ENCODE measurements at regions of chr12 and their contacts with region 1.

Region 1: DNA sequence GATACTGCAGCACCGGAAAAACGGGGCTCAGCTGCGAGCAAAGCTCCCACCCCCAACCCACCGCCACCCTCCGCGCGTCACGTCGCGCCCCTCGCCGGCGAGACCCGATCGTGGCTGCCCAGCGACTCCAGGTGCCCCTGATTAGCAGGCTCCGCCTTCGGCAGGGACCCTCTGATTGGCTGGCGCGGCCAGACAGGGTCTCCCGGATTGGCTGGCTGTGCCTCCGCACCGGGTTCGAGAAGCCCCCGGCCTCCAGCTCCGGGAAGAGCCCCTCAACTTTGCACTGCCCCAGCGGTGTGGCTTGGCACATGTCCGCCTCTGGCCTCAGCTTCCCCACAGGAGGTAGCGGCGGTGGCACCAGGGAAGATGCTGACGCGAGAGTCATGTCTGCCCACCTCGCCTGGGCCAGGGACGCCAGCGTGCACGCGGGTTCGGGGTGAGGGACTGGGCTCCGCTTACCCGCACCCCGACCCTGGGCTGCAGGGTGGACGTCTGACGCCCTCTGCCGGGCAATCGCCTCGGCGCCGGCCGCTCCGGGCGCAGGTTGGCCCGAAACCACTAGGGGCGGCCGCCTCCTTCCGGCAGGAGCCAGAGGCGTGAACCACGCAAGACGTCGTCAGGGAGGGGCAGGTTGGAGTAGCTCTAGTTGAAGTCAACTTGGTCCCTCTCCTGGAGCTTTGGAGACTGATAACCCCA is 498 bp upstream of the RHOF start:
- DNase-seq: peak; percentile 99
- H3K4me3 Mint-ChIP-seq: peak overlapping the region; percentile 94
- H3K27ac Mint-ChIP-seq: peak overlapping the region; percentile 92
- H3K4me1 Mint-ChIP-seq: peaks cover 55% of the 10 kb centered on the region
- H3K27me3 Mint-ChIP-seq: no peaks in the 10 kb centered on the region

Region 2: GRCh38 chr12:120534203-120534702 is 1259.7 kb before region 1 on chr12 and contains the start of gene RNF10:
- intact Hi-C with region 1: loop called (anchors 10 kb)
- DNase-seq: peak; percentile 94
- H3K4me3 Mint-ChIP-seq: peak within 1 kb of the TSS; percentile 96
- H3K27ac Mint-ChIP-seq: peak within 1 kb of the TSS; percentile 96
- H3K4me1 Mint-ChIP-seq: peaks cover 45% of the 10 kb centered on the region
- H3K27me3 Mint-ChIP-seq: no peaks in the 10 kb centered on the region
- total RNA-seq, gene RNF10: 153 and 160 TPM in 2 replicates

Region 3: DNA sequence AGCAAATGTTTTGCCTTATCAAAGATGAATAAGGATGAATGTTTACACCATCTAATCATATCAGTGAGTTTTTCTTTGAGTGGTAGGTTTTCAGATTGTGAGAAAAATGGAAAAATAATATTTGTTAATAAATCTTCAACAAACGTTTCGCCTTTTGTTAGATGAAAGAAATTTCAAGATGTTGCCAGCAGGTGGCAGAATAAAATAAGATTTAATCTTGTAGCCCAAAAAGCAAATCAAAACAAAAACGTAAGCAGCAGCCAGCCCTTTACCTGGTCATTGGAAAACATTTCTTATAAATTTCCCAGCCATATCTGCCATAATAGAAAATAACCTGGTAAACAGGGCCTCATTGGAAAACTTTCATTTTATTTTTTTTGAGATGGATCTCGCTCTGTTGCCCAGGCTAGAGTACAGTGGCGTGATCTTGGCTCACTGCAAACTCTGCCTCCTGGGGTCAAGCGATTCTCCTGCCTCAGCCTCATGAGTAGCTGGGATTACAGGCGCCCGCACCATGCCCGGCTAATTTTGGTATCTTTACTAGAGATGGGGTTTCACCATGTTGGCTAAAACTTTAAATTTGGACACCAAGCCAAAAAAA is 96.8 kb before region 1 on chr12:
- intact Hi-C with region 1: loop called (anchors 1 kb)
- DNase-seq: peak; percentile 84
- H3K4me3 Mint-ChIP-seq: no peak overlapping the region
- H3K27ac Mint-ChIP-seq: no peak overlapping the region
- H3K4me1 Mint-ChIP-seq: no peaks in the 10 kb centered on the region
- H3K27me3 Mint-ChIP-seq: peaks cover 8% of the 10 kb centered on the region

Region 4: GRCh38 chr12:121773011-121773777 is 20.8 kb before region 1 on chr12:
- intact Hi-C with region 1: loop called (anchors 1 kb)
- DNase-seq: peak; percentile 94
- H3K4me3 Mint-ChIP-seq: no peak overlapping the region
- H3K27ac Mint-ChIP-seq: no peak overlapping the region
- H3K4me1 Mint-ChIP-seq: peaks cover 9% of the 10 kb centered on the region
- H3K27me3 Mint-ChIP-seq: no peaks in the 10 kb centered on the region

Region 5: DNA sequence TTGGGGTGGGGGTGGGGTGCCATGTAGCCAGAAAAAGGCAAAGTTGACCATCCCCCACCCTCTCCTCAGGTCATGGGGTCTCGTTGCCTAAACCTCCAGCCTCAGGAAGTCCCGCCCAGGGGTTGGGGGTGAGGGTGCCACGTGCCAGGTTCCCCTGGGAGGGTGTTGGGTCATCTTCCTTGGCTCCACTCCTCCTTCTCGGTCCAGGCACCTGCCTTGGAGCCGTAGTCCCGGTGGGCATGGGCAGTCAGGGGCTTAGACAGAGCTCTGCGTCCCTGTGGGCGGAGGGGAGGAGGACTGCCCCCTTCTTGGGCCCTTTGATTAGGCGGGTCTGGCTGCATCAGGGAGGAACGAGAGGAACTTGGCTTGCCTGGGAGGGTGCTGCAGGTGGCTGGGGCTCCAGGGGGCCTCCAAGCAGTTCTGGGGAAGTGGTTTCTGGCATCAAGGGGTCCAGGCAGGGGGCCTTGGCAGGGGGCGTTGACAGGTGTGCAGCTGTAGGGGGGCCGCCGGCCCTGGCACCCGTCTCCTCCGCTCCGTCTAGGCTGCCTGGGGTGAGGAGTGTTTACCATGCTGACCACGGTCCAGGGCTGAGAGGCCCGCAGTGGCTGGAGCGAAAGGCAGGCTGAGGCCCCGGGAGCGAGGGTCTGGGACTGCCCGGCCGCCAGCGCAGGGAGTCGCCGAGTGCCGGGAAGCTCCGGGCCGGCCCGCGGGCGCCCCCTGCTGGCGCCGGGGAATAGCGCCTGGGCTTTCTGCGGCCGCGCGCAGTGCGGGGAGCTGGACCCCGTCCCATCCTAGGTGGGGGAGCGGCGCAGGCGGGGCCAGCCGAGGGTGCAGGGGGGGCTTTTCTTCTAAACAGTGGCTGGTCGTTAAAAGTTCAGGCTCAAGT is 17.7 kb after region 1 on chr12:
- intact Hi-C with region 1: loop called (anchors 1 kb)
- DNase-seq: peak; percentile 93
- H3K4me3 Mint-ChIP-seq: peak overlapping the region; percentile 83
- H3K27ac Mint-ChIP-seq: peak overlapping the region; percentile 35
- H3K4me1 Mint-ChIP-seq: peaks cover 35% of the 10 kb centered on the region
- H3K27me3 Mint-ChIP-seq: no peaks in the 10 kb centered on the region

Region 6: DNA sequence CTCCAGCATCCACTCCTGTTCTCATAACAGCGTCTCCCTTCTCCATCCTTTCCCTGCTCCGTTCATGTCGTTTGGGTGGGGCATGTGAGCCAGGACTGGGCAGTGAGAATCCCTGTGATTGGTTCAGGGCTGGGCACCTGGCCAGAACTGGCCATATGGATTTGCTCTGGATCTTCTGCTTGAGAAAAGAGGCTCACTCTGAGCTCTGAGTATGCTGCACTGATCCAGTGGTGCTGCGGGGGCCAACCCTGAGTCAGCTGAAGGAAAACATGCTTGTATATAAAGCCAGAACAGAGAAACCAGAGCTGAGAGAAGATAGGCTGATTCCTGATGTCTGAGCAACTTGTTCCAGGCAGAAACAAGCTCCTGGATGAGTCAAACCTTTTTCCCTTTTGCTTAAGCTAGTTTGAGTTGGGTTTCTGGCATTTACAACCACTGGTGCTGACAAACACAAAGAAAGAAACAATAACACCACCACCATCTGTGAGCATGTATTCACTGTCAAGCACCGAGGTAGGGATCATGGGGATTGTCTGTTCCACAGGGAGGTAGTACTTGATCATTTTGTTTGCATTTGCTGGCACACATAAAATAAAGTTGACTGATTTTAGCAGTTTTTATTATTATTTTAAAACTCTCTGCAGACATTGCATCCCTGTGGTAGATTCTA is 78.7 kb after region 1 on chr12:
- intact Hi-C with region 1: no loop called
- DNase-seq: no peak
- H3K4me3 Mint-ChIP-seq: no peak overlapping the region
- H3K27ac Mint-ChIP-seq: peak overlapping the region; percentile 70
- H3K4me1 Mint-ChIP-seq: peaks cover 4% of the 10 kb centered on the region
- H3K27me3 Mint-ChIP-seq: no peaks in the 10 kb centered on the region

Region 7: GRCh38 chr12:121888478-121889266 is 94.7 kb after region 1 on chr12 and contains the start of gene PSMD9:
- intact Hi-C with region 1: loop called (anchors 1 kb)
- DNase-seq: peak; percentile 100
- H3K4me3 Mint-ChIP-seq: peak within 1 kb of the TSS; percentile 98
- H3K27ac Mint-ChIP-seq: peak within 1 kb of the TSS; percentile 99
- H3K4me1 Mint-ChIP-seq: peaks cover 33% of the 10 kb centered on the region
- H3K27me3 Mint-ChIP-seq: no peaks in the 10 kb centered on the region
- total RNA-seq, gene PSMD9: 63.8 and 69.9 TPM in 2 replicates